Heart left ventricle (tissue), 16 donors: ENCODE measurements at regions of chr17 and their contacts with region 1.

Region 1: GRCh38 chr17:7484067-7484918 is at the start of gene POLR2A:
- DNase-seq: peak; percentile 98 to 99 (median 99)
- ATAC-seq: peak; percentile 84 to 90 (median 87)
- H3K4me3 ChIP-seq: peak within 1 kb of the TSS; percentile 35 to 85 (median 72)
- H3K27ac ChIP-seq: peak within 1 kb of the TSS; percentile 94 to 100 (median 100)
- H3K4me1 ChIP-seq: peaks cover 8 to 76% (median 55%) of the 10 kb centered on the region in 12 donors
- H3K27me3 ChIP-seq: no peaks in the 10 kb centered on the region
- CTCF ChIP-seq: peak in 1 of 12 donors; percentile 4
- POLR2A ChIP-seq: peak; percentile 99 to 100
- total RNA-seq, gene POLR2A: 31.4 to 77.6 (median 50.7) TPM

Region 2: DNA sequence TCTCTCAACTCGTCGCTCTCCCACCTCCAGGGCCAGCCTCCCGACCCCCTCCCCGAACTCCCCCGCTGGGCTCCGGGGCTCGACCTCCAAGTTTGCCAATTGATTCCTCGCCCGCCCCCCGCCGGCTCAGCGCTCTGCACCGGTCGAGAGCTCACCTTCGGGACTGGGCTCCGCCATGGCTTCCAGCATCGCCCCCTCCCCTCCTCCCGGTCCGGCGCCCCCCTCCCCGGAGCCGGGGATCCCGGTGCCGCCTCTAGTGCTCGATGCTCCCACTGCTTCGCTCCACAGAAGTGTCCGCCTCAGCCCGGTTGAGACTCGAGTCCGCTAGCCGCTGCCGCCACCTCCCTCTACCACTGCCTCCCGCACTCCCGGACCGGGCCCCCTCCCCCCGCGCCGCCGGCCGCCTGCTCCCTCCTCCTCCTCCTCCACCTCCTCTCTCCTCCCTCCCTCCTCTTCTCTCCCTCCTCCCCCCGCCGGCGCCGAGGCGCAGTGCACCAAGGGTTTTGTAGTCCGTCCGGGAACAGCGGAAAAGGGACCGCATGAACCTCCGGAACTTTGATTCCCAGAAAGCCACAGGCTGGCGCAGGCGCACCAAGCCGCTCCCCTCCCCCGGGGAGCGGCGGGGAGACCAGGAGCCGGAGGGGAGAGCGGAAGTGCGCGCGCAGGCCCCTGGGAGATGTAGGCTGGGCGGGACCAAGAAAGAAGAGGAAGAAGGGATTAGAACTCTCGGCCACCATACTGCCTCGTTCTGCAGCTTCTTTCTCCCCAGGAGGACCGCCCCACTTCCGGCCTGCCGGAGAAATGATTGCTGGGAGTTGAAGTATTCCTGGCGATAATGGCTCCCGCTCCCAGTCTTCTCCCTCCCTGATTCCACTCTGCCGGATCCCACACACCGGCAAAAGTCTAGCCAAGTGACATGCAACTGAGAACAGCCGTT is 244.9 kb before region 1 on chr17 and contains the start of gene PHF23:
- intact Hi-C with region 1: loop called in 2 of 10 experiments (anchors 1 to 10 kb)
- DNase-seq: peak; percentile 99 to 100 (median 99)
- ATAC-seq: peak; percentile 79 to 86 (median 84)
- H3K4me3 ChIP-seq: peak within 1 kb of the TSS; percentile 66 to 98 (median 90)
- H3K27ac ChIP-seq: peak within 1 kb of the TSS; percentile 81 to 98 (median 94)
- H3K4me1 ChIP-seq: peaks cover 5 to 58% (median 40%) of the 10 kb centered on the region in 12 donors
- H3K27me3 ChIP-seq: no peaks in the 10 kb centered on the region
- CTCF ChIP-seq: peak in 1 of 12 donors; percentile 9
- POLR2A ChIP-seq: peak in 1 of 2 donors; percentile 56
- total RNA-seq, gene PHF23: 19.1 to 36.7 (median 23.0) TPM

Region 3: DNA sequence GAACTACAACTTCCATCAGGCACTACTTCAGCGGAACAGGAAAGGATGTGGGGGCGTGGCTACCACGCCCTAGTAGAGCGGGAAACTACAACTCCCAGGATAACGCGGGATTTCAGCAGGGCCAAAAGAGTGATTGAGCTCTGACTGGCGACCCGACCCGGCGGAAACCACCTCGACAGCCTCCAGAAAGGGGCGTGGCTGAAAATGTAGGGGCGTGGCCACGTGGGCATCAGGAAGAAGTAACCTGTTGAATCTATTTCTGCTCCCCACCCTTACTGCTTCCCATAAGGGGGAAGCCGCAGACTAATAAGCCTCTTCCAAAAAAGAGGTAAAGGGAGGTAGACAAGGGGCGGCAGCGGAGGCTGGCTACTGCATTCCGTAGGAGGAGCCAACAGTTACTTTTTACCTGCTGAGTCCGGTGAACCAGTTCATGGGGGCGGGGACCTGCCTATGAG is 49.0 kb before region 1 on chr17 and contains the start of gene TMEM102:
- intact Hi-C with region 1: loop called (anchors 2 to 10 kb)
- DNase-seq: peak; percentile 95 to 97 (median 95)
- ATAC-seq: peak; percentile 87 to 94 (median 90)
- H3K4me3 ChIP-seq: peak within 1 kb of the TSS; percentile 9 to 75 (median 53)
- H3K27ac ChIP-seq: peak within 1 kb of the TSS in 11 of 12 donors; percentile 3 to 91 (median 52)
- H3K4me1 ChIP-seq: peaks cover 4 to 56% (median 40%) of the 10 kb centered on the region in 12 donors
- H3K27me3 ChIP-seq: peaks cover 0 to 35% (median 8%) of the 10 kb centered on the region in 9 donors
- CTCF ChIP-seq: peak in 1 of 12 donors; percentile 7
- POLR2A ChIP-seq: peak in 1 of 2 donors; percentile 49
- total RNA-seq, gene TMEM102: 1.7 to 6.8 (median 4.0) TPM

Region 4: GRCh38 chr17:7462474-7463371 is 21.6 kb before region 1 on chr17:
- intact Hi-C with region 1: loop called in 1 of 10 experiments (anchors 2 kb)
- DNase-seq: peak in 1 of 5 donors; percentile 25
- ATAC-seq: peak in 1 of 4 donors; percentile 6
- H3K4me3 ChIP-seq: no peak overlapping the region
- H3K27ac ChIP-seq: no peak overlapping the region
- H3K4me1 ChIP-seq: peaks cover 5 to 24% (median 20%) of the 10 kb centered on the region in 12 donors
- H3K27me3 ChIP-seq: no peaks in the 10 kb centered on the region
- CTCF ChIP-seq: no peak
- POLR2A ChIP-seq: no peak

Region 5: DNA sequence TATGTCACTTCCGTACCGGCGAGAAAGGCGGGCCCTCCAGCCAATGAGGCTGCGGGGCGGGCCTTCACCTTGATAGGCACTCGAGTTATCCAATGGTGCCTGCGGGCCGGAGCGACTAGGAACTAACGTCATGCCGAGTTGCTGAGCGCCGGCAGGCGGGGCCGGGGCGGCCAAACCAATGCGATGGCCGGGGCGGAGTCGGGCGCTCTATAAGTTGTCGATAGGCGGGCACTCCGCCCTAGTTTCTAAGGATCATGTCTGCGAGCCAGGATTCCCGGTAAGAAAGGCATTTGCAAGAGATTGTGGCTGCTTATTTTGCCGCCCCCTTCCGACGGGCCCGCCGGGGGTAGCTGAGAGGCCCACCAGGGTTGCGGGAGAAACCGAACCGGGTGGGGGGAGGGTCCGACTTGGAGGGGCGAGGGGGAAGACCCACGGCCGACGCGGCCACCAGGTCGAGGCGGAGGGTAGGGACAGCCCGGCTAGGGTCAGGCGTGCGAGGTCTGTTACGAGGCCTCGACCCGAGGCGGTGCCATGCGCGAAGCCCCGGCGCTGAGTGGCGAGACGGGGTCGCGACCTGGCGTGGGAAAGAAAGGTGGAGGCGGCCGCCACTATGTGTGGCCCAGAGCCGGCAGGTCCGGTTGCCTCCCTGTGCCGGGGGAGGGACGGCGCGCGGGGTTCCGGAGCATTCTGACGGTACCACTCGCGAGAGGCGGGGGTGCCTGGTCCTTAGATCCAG is 88.5 kb after region 1 on chr17:
- intact Hi-C with region 1: loop called in 1 of 10 experiments (anchors 1 kb)
- DNase-seq: peak; percentile 99 to 100 (median 99)
- ATAC-seq: peak; percentile 92 to 96 (median 96)
- H3K4me3 ChIP-seq: peak overlapping the region; percentile 77 to 100 (median 100)
- H3K27ac ChIP-seq: peak overlapping the region; percentile 80 to 100 (median 98)
- H3K4me1 ChIP-seq: peaks cover 4 to 50% (median 32%) of the 10 kb centered on the region in 12 donors
- H3K27me3 ChIP-seq: no peaks in the 10 kb centered on the region
- CTCF ChIP-seq: no peak
- POLR2A ChIP-seq: peak; percentile 95 to 99